Right cardiac atrium (tissue), 5 donors: ENCODE measurements at regions of chr1 and their contacts with region 1.

Region 1: GRCh38 chr1:230594214-230594773 is 48.0 kb upstream of the COG2 start:
- DNase-seq: no peak
- ATAC-seq: no peak
- H3K4me3 ChIP-seq: no peak overlapping the region
- H3K27ac ChIP-seq: no peak overlapping the region
- H3K4me1 ChIP-seq: no peaks in the 10 kb centered on the region
- H3K27me3 ChIP-seq: no peaks in the 10 kb centered on the region

Region 2: DNA sequence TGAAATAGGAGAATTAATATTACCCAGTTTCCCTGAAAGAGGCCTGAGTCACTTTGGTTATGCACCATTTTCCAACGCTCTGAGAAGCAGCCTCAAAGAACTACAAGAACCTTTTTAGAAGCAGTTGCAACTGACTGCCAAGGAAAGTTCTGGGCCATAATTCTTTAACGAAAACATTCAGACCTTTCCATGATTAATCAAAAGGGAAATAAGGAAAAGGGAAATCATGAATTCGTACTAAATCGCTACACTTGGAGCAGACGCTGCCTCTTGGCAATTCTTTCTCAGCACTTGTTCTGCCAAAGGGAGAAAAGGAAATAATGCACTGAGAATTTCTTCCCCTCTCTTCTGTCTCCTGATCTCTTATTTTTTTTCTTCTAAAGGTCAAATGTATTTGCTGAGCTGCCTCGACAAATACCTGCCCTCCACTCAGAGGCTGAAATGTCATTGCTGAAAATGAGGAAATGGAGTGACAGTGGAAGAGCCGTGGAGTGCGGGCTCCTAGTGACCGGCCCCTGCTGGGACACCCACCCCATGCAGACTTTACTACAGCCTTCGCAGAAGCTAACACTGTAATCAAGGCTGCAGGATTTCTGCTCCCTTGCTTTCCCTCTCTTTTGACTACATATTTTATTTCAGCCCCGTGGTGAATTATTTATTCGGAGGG is 595.2 kb before region 1 on chr1:
- intact Hi-C with region 1: loop called in 1 of 4 experiments (anchors 10 kb)
- DNase-seq: no peak
- ATAC-seq: peak; percentile 39 to 49
- H3K4me3 ChIP-seq: no peak overlapping the region
- H3K27ac ChIP-seq: no peak overlapping the region
- H3K4me1 ChIP-seq: peaks cover 3% of the 10 kb centered on the region
- H3K27me3 ChIP-seq: no peaks in the 10 kb centered on the region